ENCODE measurements at regions of chr1 and their contacts with region 1.

Region 1: DNA sequence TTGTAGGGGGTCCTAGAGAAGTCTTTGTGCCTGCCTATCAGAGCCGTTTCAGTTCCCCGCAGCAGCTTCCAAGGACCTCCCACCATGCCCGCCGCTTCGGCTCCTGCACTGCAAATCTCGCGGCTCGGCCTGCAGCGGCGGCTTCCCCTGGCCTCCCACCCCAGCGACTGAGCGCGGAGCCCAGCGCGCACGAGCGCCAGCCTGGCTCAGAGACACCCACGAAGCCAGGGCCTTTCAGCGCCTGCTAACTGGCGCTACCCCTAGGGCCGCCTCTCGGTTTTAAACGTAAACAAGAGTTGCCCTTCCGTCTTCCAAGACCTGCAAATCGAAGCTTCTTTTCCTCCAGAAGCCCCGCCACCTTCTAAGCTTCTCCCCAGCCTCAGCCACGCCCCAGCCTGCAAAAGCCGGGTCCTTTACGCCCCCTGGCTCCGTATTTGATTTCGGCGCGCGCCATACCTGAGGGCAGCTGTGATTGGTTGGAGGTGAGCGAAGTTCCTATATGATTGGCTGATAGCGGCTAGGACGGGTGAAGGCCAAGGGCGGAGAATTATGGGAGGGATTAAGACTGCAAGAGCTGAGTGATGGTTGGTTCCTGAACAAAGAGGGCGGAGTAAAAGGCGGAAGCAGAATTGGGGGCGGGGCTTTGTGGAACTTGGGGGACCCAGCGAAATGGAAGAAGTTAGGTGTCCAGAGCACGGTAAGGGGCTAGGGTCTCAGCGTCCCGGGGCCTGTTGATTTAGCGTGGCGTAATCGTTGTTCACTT is at the start of gene TTF2:
- DNase-seq: peak; percentile 98
- H3K4me3 Mint-ChIP-seq: no peak within 1 kb of the TSS
- H3K27ac Mint-ChIP-seq: no peak within 1 kb of the TSS
- H3K4me1 Mint-ChIP-seq: peaks cover 54% of the 10 kb centered on the region
- H3K27me3 Mint-ChIP-seq: no peaks in the 10 kb centered on the region
- total RNA-seq, gene TTF2: 98.4 and 103 TPM in 2 replicates

Region 2: DNA sequence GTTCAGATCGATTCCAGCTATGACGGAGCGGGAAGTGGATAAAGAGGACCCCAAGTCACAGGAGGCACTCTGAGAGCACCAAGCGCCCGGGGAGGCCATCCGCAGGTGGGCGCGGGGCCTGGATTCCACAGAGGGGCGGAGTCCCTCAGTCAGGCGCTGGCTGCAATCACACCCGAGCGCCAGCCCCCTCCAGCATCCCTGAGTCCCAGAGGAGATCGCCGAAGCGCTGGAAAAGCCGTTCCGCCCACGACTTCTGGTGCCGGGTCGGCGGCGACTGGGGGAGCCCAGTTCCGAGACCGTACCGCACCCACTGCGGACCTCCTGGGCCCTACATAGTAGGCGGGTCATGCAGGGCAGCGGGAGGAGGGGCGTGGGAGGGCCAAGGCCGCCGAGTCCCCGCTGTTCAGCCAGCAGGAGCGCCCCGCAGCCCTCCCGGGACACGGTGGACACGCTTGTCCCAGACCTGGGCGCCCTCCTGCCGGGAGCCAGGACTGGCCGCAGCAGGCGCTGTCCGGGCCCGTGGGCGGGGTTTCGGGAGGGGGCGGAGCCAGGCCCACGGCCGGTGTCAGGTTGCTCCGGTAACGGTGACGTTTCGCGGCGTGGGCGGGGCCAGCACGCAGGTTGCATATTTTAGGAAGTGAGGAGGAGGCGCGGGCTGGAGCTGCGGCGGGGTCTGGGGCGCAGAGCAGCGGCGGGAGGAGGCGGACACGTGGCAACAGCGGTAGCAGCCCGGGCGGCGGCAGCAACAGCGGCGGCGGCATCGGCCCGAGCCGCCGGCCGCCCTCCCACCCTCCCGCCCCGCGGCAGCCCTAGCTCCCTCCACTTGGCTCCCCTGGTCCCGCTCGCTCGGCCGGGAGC is 687.0 kb before region 1 on chr1 and contains the start of gene ATP1A1:
- intact Hi-C with region 1: loop called (anchors 1 kb)
- DNase-seq: peak; percentile 95
- H3K4me3 Mint-ChIP-seq: peak within 1 kb of the TSS; percentile 95
- H3K27ac Mint-ChIP-seq: peak within 1 kb of the TSS; percentile 87
- H3K4me1 Mint-ChIP-seq: peaks cover 34% of the 10 kb centered on the region
- H3K27me3 Mint-ChIP-seq: peaks cover 28% of the 10 kb centered on the region
- total RNA-seq, gene ATP1A1: 196 and 200 TPM in 2 replicates

Region 3: GRCh38 chr1:116556289-116557006 is 503.4 kb before region 1 on chr1:
- intact Hi-C with region 1: loop called (anchors 5 kb)
- DNase-seq: peak; percentile 63
- H3K4me3 Mint-ChIP-seq: peak overlapping the region; percentile 2
- H3K27ac Mint-ChIP-seq: peak overlapping the region; percentile 93
- H3K4me1 Mint-ChIP-seq: peaks cover 75% of the 10 kb centered on the region
- H3K27me3 Mint-ChIP-seq: no peaks in the 10 kb centered on the region

Region 4: GRCh38 chr1:116737020-116737854 is 322.6 kb before region 1 on chr1:
- intact Hi-C with region 1: loop called (anchors 1 kb)
- DNase-seq: peak; percentile 70
- H3K4me3 Mint-ChIP-seq: peak overlapping the region; percentile 61
- H3K27ac Mint-ChIP-seq: peak overlapping the region; percentile 100
- H3K4me1 Mint-ChIP-seq: peaks cover 69% of the 10 kb centered on the region
- H3K27me3 Mint-ChIP-seq: no peaks in the 10 kb centered on the region

Region 5: DNA sequence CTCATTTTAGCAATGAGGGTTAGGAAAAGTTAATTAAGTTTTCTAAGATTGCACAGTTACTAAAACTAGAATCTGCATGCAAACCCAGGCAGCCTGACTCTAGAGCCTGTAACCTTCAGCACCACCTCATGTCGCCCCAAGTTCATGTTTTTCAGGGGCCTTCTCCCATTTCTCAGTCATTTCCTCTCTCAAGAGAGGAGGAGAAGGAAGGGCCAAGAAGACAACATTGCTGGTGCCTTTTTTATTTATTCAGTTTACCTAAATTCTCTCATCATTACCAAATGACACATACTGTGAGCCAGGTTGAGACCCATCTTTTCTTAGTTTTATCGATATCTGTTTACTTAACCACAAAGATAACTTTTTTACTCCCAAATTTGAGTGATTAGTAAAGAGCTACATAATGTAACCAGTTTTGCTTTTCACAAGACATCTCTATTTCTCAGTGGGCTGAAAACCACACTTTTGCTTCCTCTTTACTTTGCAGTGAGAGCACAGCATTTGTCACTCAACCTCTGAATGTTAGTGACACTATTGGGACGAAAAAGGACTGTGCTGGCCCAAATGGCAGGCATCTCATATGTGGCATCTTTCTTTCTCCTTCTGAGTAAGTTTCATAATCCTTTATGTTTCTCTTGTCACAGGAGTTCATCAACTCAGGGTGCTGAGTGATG is 58.5 kb before region 1 on chr1 and contains the start of gene CD101:
- intact Hi-C with region 1: loop called (anchors 5 kb)
- DNase-seq: no peak
- H3K4me3 Mint-ChIP-seq: peak within 1 kb of the TSS; percentile 31
- H3K27ac Mint-ChIP-seq: peak within 1 kb of the TSS; percentile 46
- H3K4me1 Mint-ChIP-seq: peaks cover 37% of the 10 kb centered on the region
- H3K27me3 Mint-ChIP-seq: peaks cover 9% of the 10 kb centered on the region
- total RNA-seq, gene CD101: 0.18 and 0.25 TPM in 2 replicates

Region 6: DNA sequence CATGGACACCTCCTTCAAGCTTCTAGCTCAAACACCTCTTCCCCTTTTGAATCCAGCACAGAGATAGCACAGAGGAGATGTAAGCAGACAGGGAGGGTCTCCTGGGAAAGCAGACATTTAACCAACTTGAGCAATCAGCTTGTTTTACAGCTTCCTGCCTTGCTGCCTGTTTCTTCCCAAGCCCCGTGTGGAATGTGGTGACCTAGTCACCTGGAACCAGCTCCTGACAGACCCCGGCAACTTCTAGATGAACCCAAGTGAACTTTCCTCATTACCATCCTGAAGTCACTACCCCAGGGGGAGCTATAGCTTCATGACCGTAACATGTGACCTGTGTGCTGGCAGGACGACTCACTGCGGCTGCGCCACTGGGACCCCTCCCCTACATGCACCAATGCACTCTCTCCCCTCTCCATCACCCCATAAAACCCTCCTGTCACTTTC is 23.8 kb before region 1 on chr1:
- intact Hi-C with region 1: no loop called
- DNase-seq: no peak
- H3K4me3 Mint-ChIP-seq: no peak overlapping the region
- H3K27ac Mint-ChIP-seq: no peak overlapping the region
- H3K4me1 Mint-ChIP-seq: peaks cover 1% of the 10 kb centered on the region
- H3K27me3 Mint-ChIP-seq: no peaks in the 10 kb centered on the region

Region 7: DNA sequence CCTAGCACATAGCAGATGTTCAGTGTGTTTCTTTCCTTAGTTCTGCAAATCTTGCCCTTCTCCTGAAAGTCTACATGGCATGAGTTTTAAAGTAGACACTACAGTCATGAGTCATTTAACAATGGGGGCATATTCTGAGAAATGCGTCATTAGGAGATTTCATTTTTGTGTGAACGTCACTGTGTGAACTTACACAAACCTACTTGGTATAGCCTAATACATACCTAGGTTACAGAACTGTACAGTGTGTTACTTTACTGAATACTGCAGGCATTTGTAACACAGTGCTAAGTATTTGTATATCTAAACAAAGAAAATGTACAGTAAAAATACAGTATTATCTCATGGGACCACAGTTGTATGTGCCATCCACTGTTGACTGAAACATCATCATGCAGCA is 10.3 kb after region 1 on chr1:
- intact Hi-C with region 1: no loop called
- DNase-seq: no peak
- H3K4me3 Mint-ChIP-seq: no peak overlapping the region
- H3K27ac Mint-ChIP-seq: no peak overlapping the region
- H3K4me1 Mint-ChIP-seq: peaks cover 37% of the 10 kb centered on the region
- H3K27me3 Mint-ChIP-seq: no peaks in the 10 kb centered on the region

Region 8: GRCh38 chr1:117367047-117368018 is 307.5 kb after region 1 on chr1 and contains the start of gene MAN1A2:
- intact Hi-C with region 1: loop called (anchors 5 kb)
- DNase-seq: peak; percentile 77
- H3K4me3 Mint-ChIP-seq: peak within 1 kb of the TSS; percentile 90
- H3K27ac Mint-ChIP-seq: peak within 1 kb of the TSS; percentile 93
- H3K4me1 Mint-ChIP-seq: peaks cover 57% of the 10 kb centered on the region
- H3K27me3 Mint-ChIP-seq: no peaks in the 10 kb centered on the region
- total RNA-seq, gene MAN1A2: 26.0 and 27.1 TPM in 2 replicates

Measured in activated T-helper 2 cell treated with anti-CD3 and anti-CD28 coated beads, Interferon-gamma antibody, Interleukin-2, Interleukin-4, amounts not matched to agents 10 μg/mL and 5 μg/mL and 100 μg/mL, durations not matched to agents 14 hours and 24 hours and 36 hours (primary cell).